ENCODE measurements at regions of chr3 and their contacts with region 1.

Region 1: DNA sequence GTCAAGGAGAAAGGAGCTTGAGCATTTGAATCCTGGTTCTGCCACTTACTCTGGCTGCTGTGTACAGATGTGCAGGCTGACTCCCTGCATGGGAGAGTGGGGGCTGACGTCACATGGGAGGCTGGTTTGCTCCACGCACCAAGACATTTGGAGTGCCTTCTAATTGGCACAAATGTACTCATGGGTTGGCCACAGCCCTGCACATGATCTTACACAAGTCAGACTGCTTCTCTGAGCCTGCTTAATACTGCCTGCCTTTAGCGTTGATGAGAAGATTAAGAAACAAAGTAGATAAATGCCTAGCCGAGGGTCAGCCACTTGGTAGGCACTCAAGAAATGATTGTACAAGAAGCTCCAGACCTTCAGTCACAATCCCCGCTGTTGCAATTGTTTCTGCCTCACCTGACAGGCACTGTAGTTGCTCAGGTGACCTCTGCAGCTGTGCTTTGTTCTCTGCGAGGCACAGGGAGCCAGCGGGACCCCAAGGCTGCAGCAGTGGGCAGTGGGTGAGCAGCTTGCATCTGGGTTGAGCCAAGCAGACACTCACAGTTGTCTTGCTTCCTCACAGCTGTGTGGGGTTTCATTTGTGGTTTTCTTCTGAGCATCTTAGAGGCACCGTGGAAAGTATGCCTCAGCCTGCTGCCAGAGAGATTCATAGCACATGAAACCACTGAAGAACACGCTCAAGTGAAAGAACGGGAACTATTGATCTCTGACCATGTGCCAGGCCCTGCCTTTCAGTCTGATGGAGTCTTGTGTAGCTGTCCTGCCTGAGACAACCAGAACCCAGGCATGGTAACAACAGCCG is 33.1 kb downstream of the GRK7 start:
- DNase-seq: peak; percentile 90
- ATAC-seq: peak; percentile 84
- H3K4me3 Mint-ChIP-seq: peak overlapping the region; percentile 77
- H3K27ac Mint-ChIP-seq: peak overlapping the region; percentile 97
- H3K4me1 Mint-ChIP-seq: peaks cover 52% of the 10 kb centered on the region
- H3K27me3 Mint-ChIP-seq: no peaks in the 10 kb centered on the region

Region 2: DNA sequence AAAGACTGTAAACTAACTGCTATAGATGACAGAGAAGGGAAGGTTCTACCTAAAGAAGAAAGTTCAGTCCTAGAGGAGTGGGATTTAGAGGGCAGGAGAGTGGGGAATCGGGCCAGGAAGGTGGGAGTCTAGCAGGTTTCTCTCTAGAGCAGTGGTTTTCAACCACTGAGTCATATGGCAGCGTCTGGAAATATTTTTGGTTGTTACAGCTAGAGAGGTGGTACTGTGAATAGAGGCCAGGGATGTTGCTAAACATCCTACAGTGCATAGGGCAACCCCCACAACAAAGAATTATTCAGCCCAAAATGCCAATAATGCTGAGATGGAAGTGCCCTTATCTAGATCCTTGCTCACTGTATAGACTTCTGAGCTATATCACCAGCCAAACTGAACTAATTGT is 108.8 kb after region 1 on chr3:
- CTCF ChIA-PET with region 1: no interaction called
- POLR2A ChIA-PET with region 1: no interaction called
- intact Hi-C with region 1: loop called in 1 of 2 experiments (anchors 1 kb)
- DNase-seq: no peak
- ATAC-seq: peak; percentile 37
- H3K4me3 Mint-ChIP-seq: no peak overlapping the region
- H3K27ac Mint-ChIP-seq: peak overlapping the region; percentile 8
- H3K4me1 Mint-ChIP-seq: peaks cover 29% of the 10 kb centered on the region
- H3K27me3 Mint-ChIP-seq: no peaks in the 10 kb centered on the region

Region 3: DNA sequence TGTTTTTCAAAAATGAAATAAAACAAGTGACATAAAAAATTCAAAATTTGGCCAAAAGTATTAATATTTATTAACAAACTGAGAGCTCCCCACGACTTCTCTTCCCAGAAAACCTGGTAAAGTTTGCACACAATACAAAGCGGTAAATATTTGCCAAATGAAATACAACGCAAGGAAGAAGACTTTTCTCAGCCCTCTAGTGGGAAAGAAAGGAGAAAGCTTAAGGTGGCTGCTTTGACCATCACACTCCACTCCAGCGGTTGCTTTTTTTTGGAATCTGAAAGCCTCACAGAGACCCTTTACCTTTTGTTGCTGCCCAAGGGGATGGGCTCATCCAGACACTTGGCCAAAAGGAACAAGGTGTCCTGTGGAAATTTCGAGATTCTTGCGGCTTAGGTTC is 430.2 kb after region 1 on chr3:
- CTCF ChIA-PET with region 1: no interaction called
- POLR2A ChIA-PET with region 1: no interaction called
- intact Hi-C with region 1: loop called in 1 of 2 experiments (anchors 5 kb)
- DNase-seq: no peak
- ATAC-seq: no peak
- H3K4me3 Mint-ChIP-seq: peak overlapping the region; percentile 82
- H3K27ac Mint-ChIP-seq: no peak overlapping the region
- H3K4me1 Mint-ChIP-seq: peaks cover 13% of the 10 kb centered on the region
- H3K27me3 Mint-ChIP-seq: no peaks in the 10 kb centered on the region